Cardiac septum (tissue), 1 donor: ENCODE measurements at regions of chr6 and their contacts with region 1.

Region 1: DNA sequence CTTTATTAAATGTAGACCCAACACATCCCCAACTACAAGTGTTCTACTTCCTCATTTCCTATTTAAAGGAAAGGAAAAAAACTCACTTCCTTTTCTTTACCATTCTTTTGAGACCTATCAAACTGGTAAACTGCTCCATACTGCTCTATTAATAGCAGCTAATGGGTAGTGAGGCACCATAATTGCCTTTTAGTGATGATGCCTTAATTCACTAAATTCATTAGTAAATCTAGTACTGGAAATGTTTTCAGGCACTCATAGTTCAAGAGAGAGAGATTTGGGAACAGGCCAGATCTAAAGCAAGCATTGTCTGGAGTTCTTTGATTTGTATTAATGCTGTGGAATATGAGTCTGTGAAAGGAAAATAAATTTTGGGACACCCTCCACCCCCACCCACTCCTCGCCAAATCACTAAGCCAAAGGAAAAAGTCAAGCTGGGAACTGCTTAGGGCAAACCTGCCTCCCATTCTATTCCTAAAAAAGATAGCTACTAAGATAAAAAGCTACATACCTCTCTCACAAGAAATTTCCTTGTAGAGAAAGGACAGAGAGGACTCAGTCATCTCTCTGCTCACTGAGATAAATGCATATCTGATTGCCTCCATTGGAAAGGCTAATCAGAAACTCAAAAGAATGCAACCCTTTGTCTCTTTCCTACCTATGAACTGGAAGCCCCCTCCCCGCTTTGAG is 13.6 kb upstream of the IBTK start:
- DNase-seq: no peak

Region 2: GRCh38 chr6:82331031-82331773 is 70.1 kb after region 1 on chr6:
- intact Hi-C with region 1: no loop called
- DNase-seq: no peak

Region 3: DNA sequence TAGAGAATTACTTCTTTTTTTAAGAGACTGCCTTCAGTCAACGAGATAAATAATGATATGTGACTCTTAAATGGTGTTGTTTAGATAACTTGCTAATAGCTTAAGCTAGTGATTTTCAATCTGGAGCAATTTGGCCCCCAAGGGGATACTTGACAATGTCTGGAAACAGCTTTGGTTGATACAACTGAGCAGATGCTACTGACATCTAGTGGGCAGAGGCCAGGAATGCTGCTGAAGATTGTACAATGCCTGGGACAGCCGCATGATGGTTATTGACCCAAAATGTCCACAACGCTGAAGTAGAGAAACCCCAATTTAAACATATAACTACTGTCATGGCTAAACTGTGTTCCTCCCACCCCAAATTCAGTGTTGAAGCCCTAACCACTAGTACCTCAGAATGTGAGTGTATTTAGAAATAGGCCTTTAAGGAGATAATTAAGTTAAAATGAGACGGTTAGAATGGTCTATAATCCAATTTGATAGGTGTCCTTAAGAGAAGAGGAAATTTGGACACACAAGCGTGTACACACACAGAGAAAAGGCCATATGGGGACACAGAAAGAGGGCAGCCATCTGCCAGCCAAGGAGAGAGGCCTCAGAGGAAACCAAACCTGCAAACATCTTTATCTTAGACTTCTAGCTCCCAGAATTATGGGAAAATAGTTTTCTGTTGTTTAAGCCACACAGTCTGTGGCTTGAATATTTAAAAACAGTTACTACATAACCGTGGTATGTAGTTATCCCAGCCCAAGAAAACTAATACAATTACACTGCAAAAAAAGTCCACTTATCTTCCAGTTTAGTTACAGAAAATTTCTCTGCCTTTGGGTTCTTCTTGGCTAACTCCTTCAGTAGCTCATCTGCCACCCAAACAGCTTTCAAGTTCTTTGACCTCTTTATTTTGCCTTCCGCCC is 954.2 kb after region 1 on chr6:
- intact Hi-C with region 1: loop called (anchors 10 kb)
- DNase-seq: no peak